Activated CD4-positive, alpha-beta memory T cell treated with anti-CD3 and anti-CD28 coated beads, Interleukin-2, amount 10 ng/mL, durations not matched to agents 7 days and 5 days (primary cell): ENCODE measurements at regions of chr14 and their contacts with region 1.

Region 1: DNA sequence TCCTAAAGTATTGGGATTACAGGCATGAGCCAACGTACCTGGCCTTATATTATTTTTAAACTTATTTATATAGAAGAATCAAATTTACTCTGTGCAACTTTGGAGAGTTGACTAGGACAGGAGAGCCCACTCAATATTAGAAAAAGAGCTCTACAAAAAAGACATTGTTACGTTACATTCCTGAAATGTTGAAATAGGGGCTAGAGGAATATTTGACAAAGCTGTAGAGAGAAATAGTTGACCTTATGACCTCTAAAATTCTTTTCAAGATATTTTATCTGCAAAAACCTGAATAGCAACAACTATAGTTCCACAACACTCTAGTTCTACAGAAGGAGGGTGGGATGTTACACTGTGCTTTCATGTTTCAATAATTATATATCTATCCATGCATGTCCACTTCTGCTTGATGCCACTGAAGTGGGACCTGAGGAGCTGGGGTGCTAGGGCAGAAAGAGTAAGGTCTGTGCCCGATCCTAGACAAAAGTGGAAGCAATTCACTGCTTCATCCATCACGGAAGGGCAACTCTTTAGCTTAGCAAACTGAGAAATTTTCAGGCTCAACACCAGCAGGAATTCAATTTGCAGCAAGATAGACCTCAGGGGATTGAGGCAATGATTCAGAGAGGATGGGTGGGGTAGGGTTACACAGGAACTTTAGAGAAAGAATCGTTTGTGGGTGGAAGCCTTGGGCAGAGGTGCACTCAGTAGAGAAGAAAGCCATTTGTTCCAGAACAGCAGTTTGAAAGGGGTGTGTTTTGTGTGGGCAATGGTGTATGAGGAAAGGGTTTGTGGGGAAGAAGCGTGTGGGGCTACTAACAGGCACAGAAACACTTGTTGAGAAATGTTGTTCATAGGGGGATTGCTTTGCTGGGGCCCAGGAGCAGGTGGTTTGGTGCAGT is 16.0 kb upstream of the RNASE10 start:
- DNase-seq: peak; percentile 41
- H3K4me3 Mint-ChIP-seq: peak overlapping the region; percentile 29
- H3K27ac Mint-ChIP-seq: peak overlapping the region; percentile 86
- H3K4me1 Mint-ChIP-seq: peaks cover 67% of the 10 kb centered on the region
- H3K27me3 Mint-ChIP-seq: no peaks in the 10 kb centered on the region

Region 2: GRCh38 chr14:20454516-20455354 is 34.6 kb before region 1 on chr14 and contains the starts of genes APEX1 and OSGEP:
- CTCF ChIA-PET with region 1: interaction called, 5 read pairs
- POLR2A ChIA-PET with region 1: interaction called, 14 read pairs
- DNase-seq: peak; percentile 99
- H3K4me3 Mint-ChIP-seq: no peak within 1 kb of the TSS
- H3K27ac Mint-ChIP-seq: no peak within 1 kb of the TSS
- H3K4me1 Mint-ChIP-seq: peaks cover 33% of the 10 kb centered on the region
- H3K27me3 Mint-ChIP-seq: no peaks in the 10 kb centered on the region
- total RNA-seq, gene APEX1: 91.9 to 103 TPM
- total RNA-seq, gene OSGEP: 35.8 to 40.3 TPM

Region 3: GRCh38 chr14:20461274-20462001 is 27.9 kb before region 1 on chr14 and contains the start of gene PIP4P1:
- CTCF ChIA-PET with region 1: interaction called, 3 read pairs
- POLR2A ChIA-PET with region 1: interaction called, 39 read pairs
- DNase-seq: peak; percentile 98
- H3K4me3 Mint-ChIP-seq: peak within 1 kb of the TSS; percentile 97
- H3K27ac Mint-ChIP-seq: peak within 1 kb of the TSS; percentile 90
- H3K4me1 Mint-ChIP-seq: peaks cover 39% of the 10 kb centered on the region
- H3K27me3 Mint-ChIP-seq: no peaks in the 10 kb centered on the region
- total RNA-seq, gene PIP4P1: 39.5 to 42.9 TPM

Region 4: GRCh38 chr14:20469242-20469889 is 20.0 kb before region 1 on chr14 and contains the start of gene PNP:
- CTCF ChIA-PET with region 1: interaction called, 13 read pairs
- POLR2A ChIA-PET with region 1: interaction called, 66 read pairs
- DNase-seq: peak; percentile 91
- H3K4me3 Mint-ChIP-seq: peak within 1 kb of the TSS; percentile 88
- H3K27ac Mint-ChIP-seq: peak within 1 kb of the TSS; percentile 91
- H3K4me1 Mint-ChIP-seq: peaks cover 42% of the 10 kb centered on the region
- H3K27me3 Mint-ChIP-seq: no peaks in the 10 kb centered on the region
- total RNA-seq, gene PNP: 207 to 210 TPM

Region 5: DNA sequence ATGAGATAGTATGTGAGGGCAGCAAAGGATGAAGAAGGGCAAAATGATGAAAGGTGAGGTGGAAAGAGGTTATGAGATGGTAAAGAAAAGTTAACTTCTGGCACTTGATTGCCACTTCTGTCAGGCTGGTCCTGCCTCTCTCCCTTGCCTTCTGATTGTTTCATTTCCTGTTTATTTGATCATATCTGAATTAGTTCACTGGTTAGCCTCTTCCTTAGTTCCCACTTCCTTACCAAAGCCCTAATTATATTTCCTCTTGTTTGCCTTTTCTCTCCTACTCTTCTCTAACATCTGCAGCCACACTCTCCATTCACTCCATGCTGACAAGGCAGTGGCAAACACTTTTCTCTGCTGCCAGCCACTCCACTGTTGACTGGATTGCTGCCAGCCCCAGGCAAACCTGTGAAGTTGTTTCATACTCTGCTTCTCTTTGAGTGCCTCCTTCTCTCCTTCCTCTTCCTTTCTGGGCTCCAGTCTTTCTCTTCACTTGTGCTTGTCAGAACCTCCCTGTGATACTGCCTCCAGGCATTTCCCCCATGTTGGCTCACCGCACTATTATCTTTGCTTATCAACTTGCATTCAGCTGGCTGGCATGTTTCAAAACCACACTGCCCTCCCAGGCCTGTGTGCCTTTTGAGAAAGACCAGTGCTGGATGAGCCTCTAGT is 12.0 kb before region 1 on chr14:
- CTCF ChIA-PET with region 1: interaction called, 3 read pairs
- POLR2A ChIA-PET with region 1: interaction called, 29 read pairs
- DNase-seq: peak; percentile 58
- H3K4me3 Mint-ChIP-seq: peak overlapping the region; percentile 38
- H3K27ac Mint-ChIP-seq: peak overlapping the region; percentile 96
- H3K4me1 Mint-ChIP-seq: peaks cover 68% of the 10 kb centered on the region
- H3K27me3 Mint-ChIP-seq: no peaks in the 10 kb centered on the region